ENCODE measurements at regions of chr15 and their contacts with region 1.

Region 1: DNA sequence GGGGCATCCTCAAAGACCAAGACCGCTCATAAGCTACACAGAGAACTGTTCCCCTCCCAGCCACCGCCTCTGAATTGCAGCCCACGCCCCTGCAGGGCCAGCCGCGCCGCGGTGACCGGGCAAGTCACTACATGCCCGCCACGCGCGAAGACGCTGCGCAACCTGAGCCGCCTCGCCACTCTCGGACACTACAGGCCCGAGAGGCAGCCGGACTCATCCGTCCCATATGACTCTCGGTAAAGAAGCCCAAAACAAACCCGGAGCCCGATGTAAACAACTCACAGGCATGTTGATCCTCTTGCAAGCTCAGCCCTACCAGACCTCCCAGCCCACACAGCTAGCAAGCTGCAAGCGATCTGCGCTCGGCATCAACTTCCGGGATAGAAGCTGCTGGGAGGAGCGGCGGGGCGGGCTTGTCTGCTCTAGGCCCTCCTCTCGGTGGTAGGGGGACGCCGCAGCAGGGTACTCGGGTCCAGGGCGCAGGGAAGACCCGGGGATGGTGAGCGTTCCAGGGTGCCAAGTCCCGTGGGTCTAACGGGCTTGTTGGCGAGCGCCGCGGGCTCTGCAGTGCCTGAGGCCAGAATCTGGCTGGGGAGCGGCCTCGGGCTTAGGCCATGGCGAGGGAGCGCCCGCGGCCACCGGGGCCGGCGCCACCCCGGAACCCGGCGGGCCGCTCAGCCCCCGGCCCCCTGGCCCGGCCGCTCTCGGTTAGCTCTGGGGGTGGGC is at the start of gene RPS27L:
- DNase-seq: peak; percentile 95
- ATAC-seq: peak; percentile 98
- H3K4me3 Mint-ChIP-seq: peak within 1 kb of the TSS; percentile 100
- H3K27ac Mint-ChIP-seq: peak within 1 kb of the TSS; percentile 98
- H3K4me1 Mint-ChIP-seq: peaks cover 19% of the 10 kb centered on the region
- H3K27me3 Mint-ChIP-seq: no peaks in the 10 kb centered on the region
- total RNA-seq, gene RPS27L: 117 to 143 TPM

Region 2: DNA sequence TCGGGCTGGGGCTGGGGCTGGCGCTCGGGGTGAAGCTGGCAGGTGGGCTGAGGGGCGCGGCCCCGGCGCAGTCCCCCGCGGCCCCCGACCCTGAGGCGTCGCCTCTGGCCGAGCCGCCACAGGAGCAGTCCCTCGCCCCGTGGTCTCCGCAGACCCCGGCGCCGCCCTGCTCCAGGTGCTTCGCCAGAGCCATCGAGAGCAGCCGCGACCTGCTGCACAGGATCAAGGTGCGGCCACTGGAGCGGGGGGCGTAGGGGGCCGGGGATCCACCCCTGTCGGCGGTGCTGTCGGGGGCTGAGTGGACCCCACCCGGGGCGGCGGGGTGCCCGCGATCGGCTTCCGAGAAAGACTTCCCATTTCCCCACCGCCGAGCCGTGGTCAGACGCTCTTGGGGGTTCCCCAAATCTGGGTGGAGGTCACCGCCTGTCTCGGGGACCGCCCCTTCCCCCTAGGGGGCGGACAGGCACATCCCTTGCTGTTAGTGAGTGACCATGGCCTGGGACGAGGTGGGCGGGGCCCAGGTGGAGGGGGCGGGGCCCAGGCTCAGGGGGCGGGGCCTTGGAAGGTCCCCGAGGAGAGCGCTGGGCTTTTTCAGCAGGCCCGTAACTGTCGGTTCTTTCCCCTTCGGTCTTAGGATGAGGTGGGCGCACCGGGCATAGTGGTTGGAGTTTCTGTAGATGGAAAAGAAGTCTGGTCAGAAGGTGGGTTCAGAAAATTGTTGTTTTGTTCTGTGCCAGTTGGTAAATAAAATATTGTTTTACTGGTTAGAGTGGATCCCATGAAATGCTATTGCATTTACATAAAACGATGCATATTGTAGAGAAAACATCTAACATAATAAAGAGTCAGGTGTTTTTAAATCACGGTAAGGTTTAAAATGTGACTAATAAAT is 35.0 kb before region 1 on chr15:
- CTCF ChIA-PET with region 1: interaction called, 3 read pairs
- POLR2A ChIA-PET with region 1: interaction called, 6 read pairs
- intact Hi-C with region 1: loop called (anchors 1 to 2 kb)
- DNase-seq: peak; percentile 91
- ATAC-seq: peak; percentile 89
- H3K4me3 Mint-ChIP-seq: peak overlapping the region; percentile 92
- H3K27ac Mint-ChIP-seq: peak overlapping the region; percentile 88
- H3K4me1 Mint-ChIP-seq: peaks cover 12% of the 10 kb centered on the region
- H3K27me3 Mint-ChIP-seq: no peaks in the 10 kb centered on the region

Region 3: DNA sequence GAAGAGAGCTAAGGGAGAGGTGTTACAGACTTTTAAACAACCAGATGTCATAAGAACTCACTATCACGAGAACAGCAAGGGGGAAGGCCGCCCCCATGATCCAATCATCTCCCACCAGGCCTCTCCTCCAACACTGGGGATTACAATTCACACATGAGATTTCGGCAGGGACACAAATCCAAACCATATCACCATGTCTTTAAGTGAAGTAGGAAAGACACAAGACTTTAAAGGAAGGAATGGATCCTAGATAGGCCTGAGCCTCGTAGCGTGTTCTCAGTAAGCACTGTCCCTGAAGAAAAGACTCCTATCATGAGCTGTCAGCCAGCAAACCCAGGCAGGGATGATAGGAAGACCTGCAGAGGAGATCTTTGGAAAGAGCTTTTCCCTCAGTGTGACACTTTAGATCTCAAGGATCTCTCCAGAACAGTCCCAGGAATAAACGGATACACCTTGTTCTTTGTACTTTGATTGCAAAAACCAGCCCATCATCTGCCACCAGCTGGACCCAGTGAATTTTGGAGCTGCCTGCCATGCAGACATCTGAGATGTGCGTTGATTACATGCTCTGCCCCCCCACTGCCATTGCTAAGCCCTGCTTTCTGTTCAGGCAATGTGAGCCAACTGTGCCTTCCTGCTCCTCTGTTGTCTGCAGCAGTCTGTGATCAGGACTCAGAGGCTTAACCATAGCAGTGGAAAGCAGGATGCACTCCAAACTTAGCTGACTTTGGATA is 15.3 kb after region 1 on chr15:
- CTCF ChIA-PET with region 1: interaction called, 4 read pairs
- POLR2A ChIA-PET with region 1: interaction called, 9 read pairs
- intact Hi-C with region 1: loop called in 1 of 2 experiments (anchors 1 kb)
- DNase-seq: no peak
- ATAC-seq: no peak
- H3K4me3 Mint-ChIP-seq: no peak overlapping the region
- H3K27ac Mint-ChIP-seq: peak overlapping the region; percentile 16
- H3K4me1 Mint-ChIP-seq: peaks cover 14% of the 10 kb centered on the region
- H3K27me3 Mint-ChIP-seq: no peaks in the 10 kb centered on the region

Region 4: GRCh38 chr15:63234451-63234870 is 77.2 kb after region 1 on chr15:
- CTCF ChIA-PET with region 1: no interaction called
- POLR2A ChIA-PET with region 1: interaction called, 3 read pairs
- intact Hi-C with region 1: loop called (anchors 5 kb)
- DNase-seq: no peak
- ATAC-seq: no peak
- H3K4me3 Mint-ChIP-seq: no peak overlapping the region
- H3K27ac Mint-ChIP-seq: peak overlapping the region; percentile 67
- H3K4me1 Mint-ChIP-seq: peaks cover 79% of the 10 kb centered on the region
- H3K27me3 Mint-ChIP-seq: no peaks in the 10 kb centered on the region

Region 5: DNA sequence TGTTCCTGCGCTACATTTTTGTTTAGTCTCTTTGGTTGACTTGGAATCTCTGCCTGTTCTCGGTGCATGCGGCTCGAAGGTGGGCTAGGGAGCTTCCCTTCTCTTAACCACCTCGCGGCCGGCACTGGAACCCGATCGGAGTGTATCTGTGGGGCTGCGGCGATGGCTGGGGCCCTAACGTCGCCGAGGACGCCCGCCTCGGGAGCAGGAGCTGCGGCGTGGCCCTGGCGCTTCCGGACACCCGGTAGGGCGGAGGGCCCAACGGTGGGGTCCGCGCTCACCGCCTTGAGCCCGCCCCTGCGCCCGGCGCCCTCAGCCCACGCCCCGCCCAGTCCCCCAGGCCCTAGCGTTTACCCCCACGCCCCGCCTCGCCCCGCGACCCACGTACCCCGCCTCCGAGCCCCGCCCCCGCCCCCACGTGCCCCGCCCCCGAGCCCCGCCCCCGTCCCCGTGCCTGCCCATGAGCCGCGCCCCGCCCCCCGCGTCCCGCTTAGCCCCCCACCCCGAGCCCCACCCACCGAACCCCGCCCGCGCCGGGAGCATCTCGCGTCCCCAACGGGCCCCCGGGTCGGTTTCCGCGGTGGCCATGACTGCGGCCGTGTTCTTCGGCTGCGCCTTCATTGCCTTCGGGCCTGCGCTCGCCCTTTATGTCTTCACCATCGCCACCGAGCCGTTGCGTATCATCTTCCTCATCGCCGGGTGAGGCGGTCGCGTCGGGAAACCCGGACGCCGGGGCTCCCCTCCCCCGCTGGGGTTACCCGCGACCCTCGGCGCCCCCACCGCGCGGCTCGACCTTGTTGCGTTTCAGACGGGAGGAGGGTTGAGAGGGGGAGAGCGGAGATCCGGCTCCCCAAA is 120.0 kb after region 1 on chr15 and contains the start of gene APH1B:
- CTCF ChIA-PET with region 1: interaction called, 3 read pairs
- POLR2A ChIA-PET with region 1: no interaction called
- intact Hi-C with region 1: loop called (anchors 1 to 5 kb)
- DNase-seq: peak; percentile 80
- ATAC-seq: peak; percentile 83
- H3K4me3 Mint-ChIP-seq: peak within 1 kb of the TSS; percentile 78
- H3K27ac Mint-ChIP-seq: peak within 1 kb of the TSS; percentile 88
- H3K4me1 Mint-ChIP-seq: peaks cover 29% of the 10 kb centered on the region
- H3K27me3 Mint-ChIP-seq: no peaks in the 10 kb centered on the region
- total RNA-seq, gene APH1B: 6.5 to 7.8 TPM

Region 6: GRCh38 chr15:63439536-63440264 is 282.4 kb after region 1 on chr15:
- CTCF ChIA-PET with region 1: no interaction called
- POLR2A ChIA-PET with region 1: no interaction called
- intact Hi-C with region 1: no loop called
- DNase-seq: peak; percentile 53
- ATAC-seq: peak; percentile 39
- H3K4me3 Mint-ChIP-seq: no peak overlapping the region
- H3K27ac Mint-ChIP-seq: peak overlapping the region; percentile 29
- H3K4me1 Mint-ChIP-seq: peaks cover 50% of the 10 kb centered on the region
- H3K27me3 Mint-ChIP-seq: no peaks in the 10 kb centered on the region

Region 7: DNA sequence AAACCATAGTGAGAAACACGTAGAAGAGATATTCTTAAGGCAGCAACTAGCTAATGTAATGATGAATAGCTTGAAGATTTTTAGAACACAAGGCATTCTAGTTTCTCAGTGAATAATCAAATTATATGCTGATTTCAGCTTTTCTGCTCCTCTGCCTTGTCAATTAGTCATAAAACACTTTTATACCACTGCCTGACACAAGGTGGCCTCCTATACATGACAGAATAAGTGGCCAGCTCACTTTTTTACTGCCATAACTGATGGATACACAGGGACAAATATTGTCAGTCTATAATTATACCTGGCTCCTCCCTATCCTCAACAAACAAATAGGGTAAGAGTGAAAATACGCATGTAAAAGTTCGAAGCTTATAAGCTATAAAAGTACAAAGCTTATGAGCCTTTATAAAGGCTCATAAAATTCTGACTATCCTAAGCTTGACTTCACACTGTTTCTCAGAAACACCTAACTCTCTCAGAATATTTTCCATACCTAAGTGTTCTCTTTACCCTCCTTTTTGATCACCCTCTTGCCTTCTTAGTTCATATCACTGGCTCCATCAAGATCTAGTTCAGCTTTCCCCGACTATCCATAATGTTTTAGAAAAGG is 594.9 kb after region 1 on chr15:
- CTCF ChIA-PET with region 1: no interaction called
- POLR2A ChIA-PET with region 1: no interaction called
- intact Hi-C with region 1: no loop called
- DNase-seq: peak; percentile 52
- ATAC-seq: peak; percentile 92
- H3K4me3 Mint-ChIP-seq: no peak overlapping the region
- H3K27ac Mint-ChIP-seq: no peak overlapping the region
- H3K4me1 Mint-ChIP-seq: peaks cover 4% of the 10 kb centered on the region
- H3K27me3 Mint-ChIP-seq: no peaks in the 10 kb centered on the region